ENCODE measurements at regions of chr9 and their contacts with region 1.

Region 1: GRCh38 chr9:31119882-31120454 is 1264.5 kb upstream of the ACO1 start:
- DNase-seq: peak; percentile 12
- H3K4me3 ChIP-seq: no peak overlapping the region
- H3K27ac ChIP-seq: no peak overlapping the region
- H3K4me1 ChIP-seq: no peaks in the 10 kb centered on the region
- H3K27me3 ChIP-seq: no peaks in the 10 kb centered on the region
- CTCF ChIP-seq: peak; percentile 36 to 49 (median 38)
- EP300 ChIP-seq: no peak
- POLR2A ChIP-seq: no peak

Region 2: DNA sequence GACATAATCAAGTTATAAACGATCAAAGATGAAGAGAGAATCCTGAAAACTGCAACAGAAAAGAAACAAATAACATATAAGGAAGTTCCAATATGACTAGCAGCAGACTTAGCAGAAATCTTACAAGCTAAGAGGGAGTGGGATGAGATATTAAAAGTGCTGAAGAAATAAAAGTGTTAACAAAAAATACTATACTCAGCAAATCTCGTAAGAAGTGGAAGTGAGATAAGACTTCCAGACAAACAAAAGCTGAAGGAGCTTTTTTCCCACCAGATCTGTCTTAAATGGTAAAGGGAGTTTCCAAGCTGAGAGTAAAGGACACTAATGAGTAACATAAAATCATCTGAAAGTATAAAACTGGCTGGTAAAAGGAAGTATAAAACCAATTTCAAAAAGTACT is 1510.7 kb before region 1 on chr9:
- in situ Hi-C with region 1: no loop called
- intact Hi-C with region 1: loop called (anchors 10 kb)
- DNase-seq: no peak
- H3K4me3 ChIP-seq: no peak overlapping the region
- H3K27ac ChIP-seq: no peak overlapping the region
- H3K4me1 ChIP-seq: no peaks in the 10 kb centered on the region
- H3K27me3 ChIP-seq: no peaks in the 10 kb centered on the region
- CTCF ChIP-seq: no peak
- EP300 ChIP-seq: no peak
- POLR2A ChIP-seq: no peak

Region 3: DNA sequence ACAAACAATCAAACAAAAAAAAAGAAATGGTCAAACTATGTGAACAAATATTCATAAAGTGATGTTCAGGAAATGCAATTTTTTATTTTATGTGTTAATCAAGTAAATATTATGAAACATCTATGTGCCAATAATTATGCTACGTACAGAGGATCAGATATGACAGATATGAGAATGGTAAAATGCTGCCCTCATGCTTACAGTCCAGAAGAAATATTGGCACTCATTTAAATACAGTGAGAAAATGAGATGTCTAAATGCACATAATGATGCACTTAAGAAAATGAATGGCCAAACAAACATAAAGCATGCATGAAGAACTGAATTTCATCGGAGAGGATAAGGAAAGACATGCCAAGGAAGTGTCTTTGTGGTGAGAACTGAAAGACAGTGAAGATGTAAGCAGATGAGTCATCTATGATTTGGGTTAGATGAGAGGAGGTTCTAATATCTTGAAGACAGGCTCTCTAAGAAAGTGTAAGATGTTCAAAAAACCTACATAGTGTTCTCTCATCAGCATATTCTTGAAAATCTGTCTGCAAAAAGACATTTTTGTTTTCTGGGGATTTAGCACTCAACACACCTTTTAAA is 33.4 kb after region 1 on chr9:
- in situ Hi-C with region 1: no loop called
- intact Hi-C with region 1: no loop called
- DNase-seq: no peak
- H3K4me3 ChIP-seq: no peak overlapping the region
- H3K27ac ChIP-seq: no peak overlapping the region
- H3K4me1 ChIP-seq: no peaks in the 10 kb centered on the region
- H3K27me3 ChIP-seq: no peaks in the 10 kb centered on the region
- CTCF ChIP-seq: no peak
- EP300 ChIP-seq: no peak
- POLR2A ChIP-seq: no peak

Region 4: DNA sequence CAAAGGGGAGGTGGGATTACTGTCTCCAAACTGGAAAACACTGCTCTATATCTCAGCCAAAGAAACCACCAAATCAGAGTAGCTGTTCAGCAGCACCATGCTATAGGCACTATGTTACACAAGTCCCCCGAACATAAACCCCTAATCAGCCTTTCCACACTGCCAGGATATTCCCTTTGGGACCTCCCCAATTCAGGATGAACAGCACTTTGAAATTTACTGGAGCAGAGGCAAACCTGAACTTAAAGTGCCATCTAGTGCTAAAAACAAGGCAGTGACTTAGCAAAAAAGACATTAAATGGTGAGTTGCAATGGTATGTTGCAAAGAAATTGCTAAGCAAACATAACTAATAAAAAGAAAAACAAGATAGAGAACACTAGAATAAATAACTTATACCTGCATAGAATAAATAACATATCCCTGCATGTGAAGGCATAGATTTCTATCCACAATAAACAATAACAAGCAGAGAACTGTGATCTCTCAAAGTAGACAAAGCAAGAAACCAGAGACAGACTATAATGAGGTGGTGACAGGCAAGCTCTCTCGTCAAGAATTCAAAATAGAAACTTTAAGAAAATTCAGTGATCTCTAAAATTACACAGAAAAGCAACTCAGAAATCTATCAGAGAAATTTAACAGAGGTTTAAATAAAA is 680.1 kb after region 1 on chr9:
- in situ Hi-C with region 1: loop called in 3 of 4 experiments (anchors 10 to 25 kb)
- intact Hi-C with region 1: no loop called
- DNase-seq: no peak
- H3K4me3 ChIP-seq: no peak overlapping the region
- H3K27ac ChIP-seq: no peak overlapping the region
- H3K4me1 ChIP-seq: no peaks in the 10 kb centered on the region
- H3K27me3 ChIP-seq: no peaks in the 10 kb centered on the region
- CTCF ChIP-seq: peak in 2 of 5 experiments; percentile 22 to 31
- EP300 ChIP-seq: no peak
- POLR2A ChIP-seq: no peak

Region 5: GRCh38 chr9:32247168-32247567 is 1127.2 kb after region 1 on chr9:
- in situ Hi-C with region 1: loop called in 2 of 4 experiments (anchors 25 kb)
- intact Hi-C with region 1: no loop called
- DNase-seq: no peak
- H3K4me3 ChIP-seq: no peak overlapping the region
- H3K27ac ChIP-seq: no peak overlapping the region
- H3K4me1 ChIP-seq: peaks cover 0 to 3% (median 0%) of the 10 kb centered on the region in 4 donors
- H3K27me3 ChIP-seq: no peaks in the 10 kb centered on the region
- CTCF ChIP-seq: no peak
- EP300 ChIP-seq: no peak
- POLR2A ChIP-seq: no peak

Measured in transverse colon (tissue), 4 donors.